ENCODE measurements at regions of chr13 and their contacts with region 1.

Region 1: DNA sequence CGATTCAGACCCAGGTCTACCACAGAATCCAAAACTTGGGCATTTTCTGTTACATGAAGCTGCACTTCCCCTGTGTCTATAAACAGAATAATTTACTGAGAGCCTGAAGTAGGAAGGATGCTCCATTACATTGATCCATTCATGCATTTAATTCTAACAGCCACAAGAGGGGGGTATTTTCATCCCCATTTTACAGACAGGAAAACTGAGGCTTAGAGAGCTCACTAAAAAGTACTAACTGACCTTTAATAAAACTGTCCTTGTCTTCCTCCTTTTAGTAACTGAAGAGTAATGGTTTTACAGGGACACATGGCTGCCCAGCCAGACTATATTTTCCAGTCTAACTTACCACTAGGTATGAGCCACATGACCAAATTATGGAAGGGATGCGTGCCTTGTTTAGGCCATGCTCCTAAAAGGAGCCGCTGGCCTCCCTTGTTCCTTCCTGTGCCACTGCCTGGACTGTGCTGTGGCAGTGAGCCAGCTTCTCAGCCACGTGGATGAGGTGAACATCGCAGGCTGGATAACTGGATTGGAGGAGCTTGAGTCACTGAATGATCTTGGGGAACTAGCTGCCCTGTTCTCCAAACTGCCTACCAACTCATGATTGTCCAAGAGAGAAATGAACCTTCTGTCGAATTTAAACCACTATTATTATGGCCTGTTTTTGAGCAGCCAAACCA is 108.3 kb downstream of the DOCK9 start:
- DNase-seq: no peak
- H3K4me3 ChIP-seq: no peak overlapping the region
- H3K27ac ChIP-seq: no peak overlapping the region
- H3K4me1 ChIP-seq: no peaks in the 10 kb centered on the region
- H3K27me3 ChIP-seq: no peaks in the 10 kb centered on the region
- CTCF ChIP-seq: no peak

Region 2: DNA sequence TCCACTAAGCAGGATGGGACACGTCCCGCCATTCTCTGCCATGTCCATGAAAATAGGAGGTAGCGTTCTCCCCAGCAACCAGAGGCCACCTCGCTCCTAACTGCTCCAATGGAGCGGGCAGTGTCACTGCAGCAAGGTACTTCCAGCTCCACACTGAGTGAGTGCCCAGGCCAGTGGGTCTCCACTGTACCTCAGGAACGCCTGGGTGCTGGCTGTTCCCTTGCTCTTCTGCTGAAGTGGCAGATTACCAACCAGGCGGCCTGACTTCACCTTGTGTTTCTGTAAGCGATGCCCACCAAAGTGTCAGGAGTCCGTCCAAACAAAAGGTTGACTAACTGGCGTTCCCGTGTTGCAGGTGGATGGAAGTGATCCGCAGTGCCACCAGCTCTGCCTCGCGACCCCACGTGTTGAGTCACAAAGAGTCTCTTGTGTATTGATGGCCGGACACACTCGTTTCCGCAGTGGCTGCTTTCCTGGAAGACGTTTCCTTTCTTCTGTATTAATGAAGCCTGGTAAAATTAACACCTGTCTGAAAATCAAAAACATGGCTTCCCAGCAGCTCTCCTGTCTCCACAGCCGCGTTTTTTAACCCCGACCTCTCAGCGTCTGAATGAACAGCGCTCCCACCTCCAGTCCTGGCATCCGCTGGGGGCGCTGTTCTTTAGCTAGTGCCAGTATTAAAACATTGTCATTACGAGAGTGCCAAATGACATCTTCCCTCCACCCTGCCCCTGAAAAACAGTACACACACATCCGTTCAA is 421.5 kb before region 1 on chr13:
- intact Hi-C with region 1: no loop called
- DNase-seq: no peak
- H3K4me3 ChIP-seq: no peak overlapping the region
- H3K27ac ChIP-seq: no peak overlapping the region
- H3K4me1 ChIP-seq: no peaks in the 10 kb centered on the region
- H3K27me3 ChIP-seq: no peaks in the 10 kb centered on the region
- CTCF ChIP-seq: peak; percentile 14

Region 3: GRCh38 chr13:99033814-99034213 is 164.3 kb after region 1 on chr13:
- intact Hi-C with region 1: loop called (anchors 10 kb)
- DNase-seq: no peak
- H3K4me3 ChIP-seq: no peak overlapping the region
- H3K27ac ChIP-seq: no peak overlapping the region
- H3K4me1 ChIP-seq: no peaks in the 10 kb centered on the region
- H3K27me3 ChIP-seq: no peaks in the 10 kb centered on the region
- CTCF ChIP-seq: peak; percentile 41

Measured in colonic mucosa (tissue), 4 donors.